CD4-positive, alpha-beta memory T cell (primary cell): ENCODE measurements at regions of chr10 and their contacts with region 1.

Region 1: GRCh38 chr10:114173921-114174694 is at the start of gene CCDC186:
- DNase-seq: peak; percentile 97 to 98 (median 97)
- H3K4me3 ChIP-seq: peak within 1 kb of the TSS; percentile 47 to 84
- H3K4me3 Mint-ChIP-seq: peak within 1 kb of the TSS; percentile 92 to 99 (median 98)
- H3K27ac ChIP-seq: peak within 1 kb of the TSS; percentile 85
- H3K27ac Mint-ChIP-seq: peak within 1 kb of the TSS; percentile 83 to 99 (median 99)
- H3K4me1 ChIP-seq: peaks cover 35% of the 10 kb centered on the region
- H3K4me1 Mint-ChIP-seq: peaks cover 31 to 57% (median 38%) of the 10 kb centered on the region in 4 donors
- H3K27me3 ChIP-seq: no peaks in the 10 kb centered on the region
- H3K27me3 Mint-ChIP-seq: peaks cover 0 to 1% of the 10 kb centered on the region in 2 donors
- total RNA-seq, gene CCDC186: 39.1 to 43.3 TPM

Region 2: GRCh38 chr10:113854011-113854760 is 319.9 kb before region 1 on chr10 and contains the starts of genes DCLRE1A and NHLRC2:
- CTCF ChIA-PET with region 1: no interaction called
- POLR2A ChIA-PET with region 1: interaction called, 4 read pairs
- intact Hi-C with region 1: loop called (anchors 2 kb)
- DNase-seq: peak; percentile 46 to 65 (median 53)
- H3K4me3 ChIP-seq: peak within 1 kb of the TSS; percentile 90 to 97
- H3K4me3 Mint-ChIP-seq: peak within 1 kb of the TSS; percentile 96 to 100 (median 98)
- H3K27ac ChIP-seq: peak within 1 kb of the TSS; percentile 71
- H3K27ac Mint-ChIP-seq: peak within 1 kb of the TSS; percentile 92 to 98 (median 97)
- H3K4me1 ChIP-seq: peaks cover 65% of the 10 kb centered on the region
- H3K4me1 Mint-ChIP-seq: peaks cover 31 to 61% (median 44%) of the 10 kb centered on the region in 4 donors
- H3K27me3 ChIP-seq: no peaks in the 10 kb centered on the region
- H3K27me3 Mint-ChIP-seq: no peaks in the 10 kb centered on the region
- total RNA-seq, gene DCLRE1A: 4.5 to 4.7 TPM
- total RNA-seq, gene NHLRC2: 22.1 to 24.1 TPM

Region 3: DNA sequence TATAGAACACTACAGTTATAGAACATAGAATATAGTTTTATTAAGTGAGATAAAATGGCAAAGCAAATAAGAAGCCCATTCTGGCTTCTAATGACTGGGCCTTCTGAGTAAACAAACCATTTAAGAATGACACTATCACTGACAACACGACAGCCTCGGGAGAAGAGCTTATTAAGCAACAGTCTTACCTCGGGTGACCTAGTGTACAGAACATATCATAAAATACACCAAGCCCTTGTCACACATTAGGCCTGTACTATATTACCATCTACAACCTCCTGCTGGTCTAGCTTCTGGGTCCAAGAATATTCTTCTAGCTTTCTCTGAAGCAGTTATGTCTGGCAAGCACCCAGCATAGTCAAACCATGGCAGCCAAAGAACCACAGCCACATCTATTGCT is 32.1 kb before region 1 on chr10:
- CTCF ChIA-PET with region 1: no interaction called
- POLR2A ChIA-PET with region 1: no interaction called
- intact Hi-C with region 1: no loop called
- DNase-seq: no peak
- H3K4me3 ChIP-seq: no peak overlapping the region
- H3K4me3 Mint-ChIP-seq: no peak overlapping the region
- H3K27ac ChIP-seq: no peak overlapping the region
- H3K27ac Mint-ChIP-seq: no peak overlapping the region
- H3K4me1 ChIP-seq: no peaks in the 10 kb centered on the region
- H3K4me1 Mint-ChIP-seq: no peaks in the 10 kb centered on the region
- H3K27me3 ChIP-seq: no peaks in the 10 kb centered on the region
- H3K27me3 Mint-ChIP-seq: no peaks in the 10 kb centered on the region

Region 4: GRCh38 chr10:114937962-114938855 is 764.1 kb after region 1 on chr10 and contains the start of gene TRUB1:
- CTCF ChIA-PET with region 1: no interaction called
- POLR2A ChIA-PET with region 1: no interaction called
- intact Hi-C with region 1: loop called (anchors 5 kb)
- DNase-seq: peak; percentile 85 to 93 (median 87)
- H3K4me3 ChIP-seq: peak within 1 kb of the TSS; percentile 67 to 73
- H3K4me3 Mint-ChIP-seq: peak within 1 kb of the TSS; percentile 94 to 97 (median 96)
- H3K27ac ChIP-seq: peak within 1 kb of the TSS; percentile 75
- H3K27ac Mint-ChIP-seq: peak within 1 kb of the TSS; percentile 93 to 98 (median 97)
- H3K4me1 ChIP-seq: peaks cover 15% of the 10 kb centered on the region
- H3K4me1 Mint-ChIP-seq: peaks cover 21 to 41% (median 31%) of the 10 kb centered on the region in 4 donors
- H3K27me3 ChIP-seq: no peaks in the 10 kb centered on the region
- H3K27me3 Mint-ChIP-seq: no peaks in the 10 kb centered on the region
- total RNA-seq, gene TRUB1: 11.3 to 14.5 TPM